ENCODE measurements at regions of chr12 and their contacts with region 1.

Region 1: GRCh38 chr12:49232940-49233841 is 31.7 kb upstream of the TUBA1C start:
- DNase-seq: peak; percentile 66
- ATAC-seq: peak; percentile 6

Region 2: DNA sequence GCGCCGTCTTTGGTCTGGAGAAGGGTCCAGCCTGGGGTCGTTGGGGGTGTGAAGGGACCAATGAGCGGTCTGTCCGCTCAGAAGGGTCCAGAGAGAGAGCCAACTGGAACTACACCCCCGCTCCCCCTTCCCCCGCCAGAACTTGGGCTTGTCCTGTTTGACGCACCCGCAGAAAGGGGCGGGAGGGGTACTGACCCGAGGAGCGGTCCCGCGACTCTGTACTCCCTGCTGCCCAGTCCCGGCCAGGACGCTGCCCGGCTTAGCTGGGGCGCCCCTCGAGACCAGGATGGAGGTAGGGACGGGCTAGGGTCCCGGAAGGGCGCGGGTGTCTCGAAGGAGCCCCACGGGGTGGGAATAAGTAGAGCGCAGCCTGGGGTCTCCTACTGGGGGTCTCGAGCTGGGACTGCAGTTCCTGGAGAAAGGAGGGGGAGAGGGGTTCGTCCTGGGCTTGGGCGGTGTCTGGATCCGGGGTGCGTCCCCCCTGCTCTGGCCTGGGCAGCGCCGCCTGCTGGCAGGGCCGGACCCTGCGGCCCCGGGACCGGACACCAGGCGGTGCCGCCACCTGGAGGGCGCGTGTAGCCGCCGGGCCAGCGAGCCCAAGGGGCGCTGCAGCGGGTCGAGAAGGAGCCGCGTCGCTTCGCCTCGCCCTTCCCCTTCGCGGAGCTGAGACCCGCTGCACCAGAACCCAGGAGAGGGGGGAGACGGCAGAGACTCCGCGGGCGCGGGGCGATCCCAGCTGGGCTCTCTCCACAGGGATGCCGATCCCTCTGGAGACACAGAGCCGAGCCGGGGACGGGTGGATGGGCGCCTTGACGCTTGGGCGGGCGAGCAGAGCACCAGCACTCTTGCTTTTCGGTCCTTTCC is 418.7 kb before region 1 on chr12:
- intact Hi-C with region 1: no loop called
- DNase-seq: peak; percentile 93
- ATAC-seq: peak; percentile 86

Region 3: DNA sequence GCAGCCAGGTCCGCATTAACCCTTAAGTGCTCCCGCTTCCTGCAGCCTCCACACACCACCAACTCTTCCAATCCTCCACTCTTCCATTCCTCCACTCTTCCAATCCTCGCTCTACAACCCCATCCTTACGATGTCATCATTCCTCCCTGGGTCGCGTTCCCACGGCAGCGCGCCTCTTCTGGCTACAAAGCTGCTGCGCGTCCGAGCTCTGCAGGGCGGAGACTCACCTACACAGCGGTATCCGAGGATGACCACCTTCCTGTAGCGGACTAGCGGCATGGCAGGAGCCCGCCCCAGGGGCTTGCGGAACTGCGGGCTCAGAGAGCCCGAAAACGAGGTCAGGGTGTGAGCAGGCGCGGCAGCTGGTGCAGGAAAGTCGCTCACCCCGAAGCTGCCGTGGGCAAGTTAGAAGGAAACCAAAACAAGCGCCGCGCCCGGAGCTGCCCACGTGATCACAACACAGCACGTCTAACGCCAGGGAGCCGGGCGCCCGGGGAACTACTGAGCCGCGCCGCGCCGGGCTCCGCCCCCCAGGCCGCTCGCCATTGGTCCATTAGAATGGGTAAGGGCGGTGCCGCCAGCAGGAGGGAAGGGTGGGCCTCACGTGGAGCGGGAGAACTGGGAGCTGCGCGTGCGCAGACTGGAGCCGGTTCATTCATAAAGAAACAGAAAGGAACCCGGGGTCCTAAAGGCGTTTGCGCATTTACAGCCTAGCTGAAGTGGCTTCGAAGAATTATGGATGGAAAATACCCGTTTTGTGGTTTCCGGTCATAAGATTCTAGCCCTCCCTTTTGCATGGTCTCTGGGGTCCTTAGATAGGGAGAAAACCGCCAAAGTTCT is 163.5 kb before region 1 on chr12 and contains the start of gene RHEBL1:
- intact Hi-C with region 1: loop called (anchors 10 kb)
- DNase-seq: peak; percentile 98
- ATAC-seq: peak; percentile 100
- total RNA-seq, gene RHEBL1: 2.7 TPM

Region 4: DNA sequence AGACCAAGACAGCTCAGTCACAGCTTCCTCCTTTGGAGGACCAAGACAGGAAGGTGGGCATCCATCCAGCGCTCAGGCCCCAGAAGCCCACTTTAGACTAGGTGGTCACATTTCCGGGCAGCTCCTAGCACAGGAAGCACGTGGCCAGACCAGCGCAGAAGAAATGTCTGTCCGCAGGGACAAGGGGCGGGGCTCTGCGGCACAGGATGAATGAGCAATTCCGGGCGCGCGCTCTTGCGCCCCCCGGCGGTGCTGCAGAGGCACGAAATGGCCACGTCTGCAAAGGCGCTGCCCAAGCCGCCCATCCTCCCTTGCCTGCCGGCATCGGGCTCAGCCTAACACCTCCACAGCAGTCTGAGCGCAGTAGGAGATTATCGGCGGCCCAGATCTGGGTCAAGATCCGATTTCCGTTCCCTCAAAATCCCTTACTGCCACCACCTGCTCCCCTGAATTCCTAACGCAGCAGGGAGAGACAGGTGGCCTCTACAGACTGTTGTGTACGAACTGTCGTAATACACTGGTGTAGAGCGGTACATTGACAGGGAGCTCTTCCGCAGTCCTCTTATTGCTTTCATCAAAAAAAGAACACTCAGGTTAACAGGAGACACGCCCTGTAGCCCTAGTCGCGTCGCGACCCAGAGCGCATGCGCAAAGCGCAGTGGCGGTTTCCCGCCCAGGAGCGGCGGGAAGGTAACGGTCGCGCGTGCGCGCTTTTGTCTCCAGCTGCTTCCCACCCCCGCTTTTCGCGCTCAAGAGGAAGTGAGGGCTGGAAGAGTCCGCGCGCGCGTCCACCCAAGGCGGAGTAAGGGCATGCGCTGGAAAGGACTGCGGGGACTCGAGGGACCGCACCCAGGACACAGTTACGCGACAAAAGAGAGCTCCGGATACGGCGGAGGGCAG is 102.8 kb before region 1 on chr12:
- intact Hi-C with region 1: loop called (anchors 10 kb)
- DNase-seq: peak; percentile 96
- ATAC-seq: peak; percentile 93

Region 5: DNA sequence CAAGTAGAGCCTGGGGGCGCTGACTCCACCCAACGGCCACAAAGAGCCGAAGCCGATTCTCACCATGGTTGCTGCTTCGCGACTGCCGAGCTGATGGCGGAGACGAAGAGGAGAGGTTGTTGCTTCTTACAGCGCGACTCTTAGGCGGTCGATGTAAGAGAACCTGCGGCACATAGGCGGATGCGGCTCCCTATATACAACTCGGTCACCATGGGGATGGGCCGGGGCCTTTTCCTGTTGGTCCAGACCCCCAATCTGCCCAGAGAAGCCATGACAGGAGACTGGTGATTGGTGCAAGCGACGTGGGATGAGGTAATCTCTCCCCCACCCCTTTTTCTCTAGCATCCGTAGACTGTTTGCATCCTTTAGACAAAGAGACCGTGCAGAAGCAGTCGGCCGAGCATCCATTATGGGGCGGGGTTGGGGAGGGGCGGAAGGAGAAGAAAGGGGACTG is 44.2 kb before region 1 on chr12 and contains the start of gene TUBA1A:
- intact Hi-C with region 1: loop called (anchors 5 kb)
- DNase-seq: peak; percentile 96
- ATAC-seq: peak; percentile 97
- total RNA-seq, gene TUBA1A: 346 TPM

Region 6: GRCh38 chr12:49288412-49288853 is 55.2 kb after region 1 on chr12:
- intact Hi-C with region 1: no loop called
- DNase-seq: peak; percentile 77
- ATAC-seq: peak; percentile 70

Measured in sciatic nerve (tissue), 2 donors.